Activated CD4-positive, alpha-beta memory T cell treated with anti-CD3 and anti-CD28 coated beads for 36 hours (primary cell): ENCODE measurements at regions of chrX and their contacts with region 1.

Region 1: GRCh38 chrX:119871599-119872395 is at the starts of genes NDUFA1 and RNF113A:
- DNase-seq: peak; percentile 91
- H3K4me3 Mint-ChIP-seq: peak within 1 kb of the TSS; percentile 98
- H3K27ac Mint-ChIP-seq: peak within 1 kb of the TSS; percentile 98
- H3K4me1 Mint-ChIP-seq: peaks cover 10% of the 10 kb centered on the region
- H3K27me3 Mint-ChIP-seq: no peaks in the 10 kb centered on the region
- total RNA-seq, gene NDUFA1: 103 to 104 TPM
- total RNA-seq, gene RNF113A: 23.1 to 26.2 TPM

Region 2: DNA sequence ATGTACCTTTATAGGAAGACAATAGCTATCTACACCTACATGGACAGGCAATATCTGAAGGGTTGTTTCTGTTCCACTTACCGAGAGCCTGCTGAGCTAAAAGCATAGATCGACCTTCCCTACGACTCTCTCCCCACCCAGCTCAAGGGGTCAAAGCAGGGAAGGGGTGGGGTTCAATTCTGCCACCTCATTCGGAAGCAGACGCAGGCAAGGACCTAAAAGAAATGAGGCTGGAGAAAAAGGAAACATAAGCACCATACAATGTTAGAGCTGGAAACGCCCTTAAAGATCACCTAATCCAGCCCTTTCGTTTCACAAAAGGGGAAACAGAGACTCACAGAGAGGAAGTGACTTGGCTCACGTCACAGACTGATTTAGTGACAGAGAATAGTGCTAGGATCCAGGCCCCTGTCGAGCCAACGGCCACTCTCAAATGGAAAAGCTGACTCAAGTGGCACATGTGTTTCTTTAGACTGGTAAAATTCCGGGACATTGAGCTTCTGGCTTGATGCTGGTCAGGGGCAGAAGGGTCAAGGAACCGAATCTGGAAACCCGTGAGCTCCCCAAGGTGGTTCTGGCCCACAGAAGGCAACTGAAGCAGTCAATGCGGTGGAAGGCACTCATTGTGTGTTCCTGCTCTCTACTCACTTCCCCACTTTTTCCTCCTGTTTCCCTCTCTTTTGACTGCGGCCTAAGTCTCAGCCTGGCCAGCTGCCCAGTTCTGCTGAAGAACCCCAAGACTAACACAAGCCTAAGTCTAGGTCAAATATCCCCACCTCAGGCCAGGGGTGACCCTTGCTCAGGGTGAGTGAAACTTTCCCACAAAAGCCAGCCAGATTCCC is 186.4 kb before region 1 on chrX:
- CTCF ChIA-PET with region 1: no interaction called
- POLR2A ChIA-PET with region 1: interaction called, 5 read pairs
- intact Hi-C with region 1: loop called (anchors 2 kb)
- DNase-seq: peak; percentile 73
- H3K4me3 Mint-ChIP-seq: peak overlapping the region; percentile 88
- H3K27ac Mint-ChIP-seq: peak overlapping the region; percentile 99
- H3K4me1 Mint-ChIP-seq: peaks cover 48% of the 10 kb centered on the region
- H3K27me3 Mint-ChIP-seq: no peaks in the 10 kb centered on the region

Region 3: GRCh38 chrX:119753571-119754257 is 118.1 kb before region 1 on chrX:
- CTCF ChIA-PET with region 1: no interaction called
- POLR2A ChIA-PET with region 1: interaction called, 4 read pairs
- intact Hi-C with region 1: loop called (anchors 5 kb)
- DNase-seq: peak; percentile 54
- H3K4me3 Mint-ChIP-seq: peak overlapping the region; percentile 16
- H3K27ac Mint-ChIP-seq: peak overlapping the region; percentile 90
- H3K4me1 Mint-ChIP-seq: peaks cover 40% of the 10 kb centered on the region
- H3K27me3 Mint-ChIP-seq: no peaks in the 10 kb centered on the region

Region 4: GRCh38 chrX:119852382-119853353 is 19.1 kb before region 1 on chrX and contains the start of gene UPF3B:
- CTCF ChIA-PET with region 1: interaction called, 3 read pairs
- POLR2A ChIA-PET with region 1: interaction called, 15 read pairs
- intact Hi-C with region 1: loop called (anchors 1 kb)
- DNase-seq: peak; percentile 96
- H3K4me3 Mint-ChIP-seq: peak within 1 kb of the TSS; percentile 99
- H3K27ac Mint-ChIP-seq: peak within 1 kb of the TSS; percentile 94
- H3K4me1 Mint-ChIP-seq: peaks cover 8% of the 10 kb centered on the region
- H3K27me3 Mint-ChIP-seq: no peaks in the 10 kb centered on the region
- total RNA-seq, gene UPF3B: 14.8 to 15.3 TPM

Region 5: GRCh38 chrX:119943185-119943988 is 71.6 kb after region 1 on chrX and contains the start of gene NKAP:
- CTCF ChIA-PET with region 1: no interaction called
- POLR2A ChIA-PET with region 1: no interaction called
- intact Hi-C with region 1: loop called (anchors 1 kb)
- DNase-seq: peak; percentile 89
- H3K4me3 Mint-ChIP-seq: peak within 1 kb of the TSS; percentile 89
- H3K27ac Mint-ChIP-seq: peak within 1 kb of the TSS; percentile 93
- H3K4me1 Mint-ChIP-seq: peaks cover 15% of the 10 kb centered on the region
- H3K27me3 Mint-ChIP-seq: no peaks in the 10 kb centered on the region
- total RNA-seq, gene NKAP: 10.8 to 11.7 TPM